MCF 10A (cell line): ENCODE measurements at regions of chr3 and their contacts with region 1.

Region 1: GRCh38 chr3:48918388-48919214 is at the start of gene ARIH2:
- DNase-seq: peak; percentile 92
- H3K4me3 Mint-ChIP-seq: peak within 1 kb of the TSS; percentile 95
- H3K27ac Mint-ChIP-seq: peak within 1 kb of the TSS; percentile 96
- H3K4me1 Mint-ChIP-seq: no peaks in the 10 kb centered on the region
- H3K27me3 Mint-ChIP-seq: no peaks in the 10 kb centered on the region
- CTCF ChIP-seq: no peak
- total RNA-seq, gene ARIH2: 152 and 167 TPM in 2 replicates

Region 2: DNA sequence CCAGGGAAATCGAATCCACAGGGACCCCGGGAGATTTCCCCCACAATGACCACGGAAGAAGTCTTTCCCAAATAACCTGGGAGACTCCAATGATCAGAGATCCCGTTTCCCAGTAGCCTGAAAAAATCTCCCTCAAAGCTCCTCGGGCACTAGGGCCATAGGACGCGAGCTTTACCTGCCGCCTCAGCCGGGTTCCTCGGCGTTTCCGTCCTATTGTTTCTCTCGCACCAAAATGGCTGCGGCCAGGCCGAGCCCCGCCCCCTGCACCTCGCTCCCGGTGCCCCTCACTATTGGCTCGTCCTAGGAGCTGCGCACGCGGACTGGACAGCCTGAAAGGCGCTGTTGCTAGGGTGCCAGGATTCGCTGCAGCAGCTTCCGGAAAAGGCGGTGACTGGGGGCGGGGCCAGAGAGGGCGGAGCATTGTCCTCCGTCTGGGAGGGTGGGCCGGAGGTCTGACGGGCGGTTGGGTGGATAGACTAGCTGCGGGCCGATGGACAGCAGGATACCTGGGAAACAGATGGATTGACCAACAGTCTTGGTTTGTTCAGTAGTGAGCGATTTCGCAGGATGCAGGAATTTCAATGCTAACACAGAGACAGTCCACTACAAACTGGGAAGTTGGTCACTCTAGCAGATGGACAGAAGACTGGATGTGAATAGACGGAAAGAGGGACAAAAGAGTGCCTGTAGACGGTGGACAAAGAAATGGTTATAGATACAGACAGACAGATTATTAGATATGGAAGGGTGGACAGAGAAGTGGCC is 201.4 kb before region 1 on chr3 and contains the start of gene IP6K2:
- CTCF ChIA-PET with region 1: interaction called, 5 read pairs
- POLR2A ChIA-PET with region 1: interaction called, 22 read pairs
- intact Hi-C with region 1: no loop called
- DNase-seq: peak; percentile 98
- H3K4me3 Mint-ChIP-seq: peak within 1 kb of the TSS; percentile 93
- H3K27ac Mint-ChIP-seq: peak within 1 kb of the TSS; percentile 98
- H3K4me1 Mint-ChIP-seq: peaks cover 12% of the 10 kb centered on the region
- H3K27me3 Mint-ChIP-seq: no peaks in the 10 kb centered on the region
- CTCF ChIP-seq: no peak
- total RNA-seq, gene IP6K2: 99.3 and 117 TPM in 2 replicates

Region 3: DNA sequence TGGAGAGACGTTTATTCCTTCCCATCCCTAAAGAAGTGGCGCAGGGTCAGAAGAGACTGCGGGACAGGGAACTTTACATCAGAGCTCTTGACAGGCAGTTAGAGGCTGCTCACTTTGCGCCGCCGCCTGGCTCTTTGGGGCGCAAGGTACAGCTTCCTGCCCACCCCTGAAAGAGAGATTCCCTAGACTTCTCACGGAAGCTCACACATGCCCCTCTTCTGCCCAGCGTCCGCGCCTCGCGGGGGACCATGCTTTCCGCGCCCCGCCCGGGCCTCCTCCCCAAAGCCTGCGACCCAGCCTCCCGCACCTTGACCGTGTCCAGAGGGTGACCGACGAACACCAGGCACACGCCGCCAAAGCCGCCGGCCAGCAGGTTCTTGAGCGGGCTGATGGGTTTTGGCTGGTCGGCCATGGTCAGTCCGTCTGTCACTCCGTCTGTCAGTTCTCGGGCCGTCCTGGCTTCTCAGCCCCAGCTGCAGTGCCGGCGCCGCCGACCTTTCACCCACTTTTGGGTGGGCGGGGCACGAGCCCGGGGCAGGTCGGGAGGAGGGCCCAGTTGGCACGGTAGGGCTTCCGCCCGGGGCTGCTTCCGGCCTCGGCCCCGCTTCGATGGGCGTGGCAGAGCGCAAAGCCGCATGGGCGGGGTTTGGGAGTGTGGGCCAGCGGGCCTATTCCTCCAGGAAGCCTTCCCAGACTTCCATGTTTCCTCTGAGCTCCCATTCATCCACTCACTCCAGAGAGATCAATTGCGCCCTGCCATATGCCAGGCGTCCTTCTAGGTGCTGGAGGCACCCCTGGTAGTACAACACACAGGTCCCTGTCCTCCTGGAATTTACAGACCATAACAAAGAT is 20.0 kb before region 1 on chr3 and contains the start of gene SLC25A20:
- CTCF ChIA-PET with region 1: no interaction called
- POLR2A ChIA-PET with region 1: interaction called, 32 read pairs
- intact Hi-C with region 1: no loop called
- DNase-seq: peak; percentile 91
- H3K4me3 Mint-ChIP-seq: peak within 1 kb of the TSS; percentile 90
- H3K27ac Mint-ChIP-seq: peak within 1 kb of the TSS; percentile 90
- H3K4me1 Mint-ChIP-seq: peaks cover 20% of the 10 kb centered on the region
- H3K27me3 Mint-ChIP-seq: no peaks in the 10 kb centered on the region
- CTCF ChIP-seq: no peak
- total RNA-seq, gene SLC25A20: 9.2 and 11.5 TPM in 2 replicates

Region 4: DNA sequence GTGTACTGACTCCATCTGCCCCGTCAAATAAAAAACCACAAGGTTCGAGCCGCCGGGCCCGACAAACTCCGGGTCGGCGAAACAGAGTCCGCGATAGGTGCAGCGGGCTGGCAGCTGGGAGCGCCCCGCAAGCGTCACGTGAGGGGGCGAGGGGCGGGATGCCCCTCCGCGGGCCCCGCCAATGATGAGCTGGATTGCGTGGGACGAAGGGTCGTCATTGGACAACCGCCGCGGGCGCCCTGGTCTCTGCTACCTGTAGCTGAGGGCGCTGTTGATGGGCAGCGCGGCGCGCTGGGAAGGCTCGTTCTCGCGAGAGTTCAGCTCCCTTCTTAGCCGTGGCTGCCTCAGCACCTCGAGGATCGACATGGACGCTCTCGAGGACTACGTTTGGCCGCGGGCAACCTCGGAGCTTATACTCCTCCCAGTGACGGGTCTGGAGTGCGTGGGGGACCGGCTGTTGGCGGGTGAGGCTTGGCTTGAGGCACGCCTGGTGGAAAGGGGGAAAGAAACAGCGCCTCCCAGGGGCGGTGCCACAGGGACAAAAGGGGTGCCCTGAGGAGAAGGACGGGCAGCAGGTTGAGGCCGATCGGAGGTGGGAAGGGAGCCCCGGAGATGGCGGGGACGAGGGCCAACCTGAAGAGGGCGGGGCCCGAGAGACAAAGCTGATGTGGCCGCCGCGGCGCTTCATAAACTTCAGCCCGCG is 88.6 kb after region 1 on chr3 and contains the start of gene WDR6:
- CTCF ChIA-PET with region 1: no interaction called
- POLR2A ChIA-PET with region 1: interaction called, 4 read pairs
- intact Hi-C with region 1: loop called (anchors 5 kb)
- DNase-seq: peak; percentile 98
- H3K4me3 Mint-ChIP-seq: peak within 1 kb of the TSS; percentile 99
- H3K27ac Mint-ChIP-seq: peak within 1 kb of the TSS; percentile 99
- H3K4me1 Mint-ChIP-seq: peaks cover 10% of the 10 kb centered on the region
- H3K27me3 Mint-ChIP-seq: no peaks in the 10 kb centered on the region
- CTCF ChIP-seq: peak; percentile 33
- total RNA-seq, gene WDR6: 112 and 116 TPM in 2 replicates